Activated CD4-positive, alpha-beta T cell treated with anti-CD3 and anti-CD28 coated beads for 36 hours (primary cell): ENCODE measurements at regions of chr5 and their contacts with region 1.

Region 1: GRCh38 chr5:16616536-16617273 is at the start of gene RETREG1:
- DNase-seq: peak; percentile 90
- ATAC-seq: peak; percentile 72
- H3K4me3 Mint-ChIP-seq: peak within 1 kb of the TSS; percentile 98
- H3K27ac Mint-ChIP-seq: peak within 1 kb of the TSS; percentile 94
- H3K4me1 Mint-ChIP-seq: peaks cover 28% of the 10 kb centered on the region
- H3K27me3 Mint-ChIP-seq: no peaks in the 10 kb centered on the region
- total RNA-seq, gene RETREG1: 17.7 to 23.3 TPM

Region 2: DNA sequence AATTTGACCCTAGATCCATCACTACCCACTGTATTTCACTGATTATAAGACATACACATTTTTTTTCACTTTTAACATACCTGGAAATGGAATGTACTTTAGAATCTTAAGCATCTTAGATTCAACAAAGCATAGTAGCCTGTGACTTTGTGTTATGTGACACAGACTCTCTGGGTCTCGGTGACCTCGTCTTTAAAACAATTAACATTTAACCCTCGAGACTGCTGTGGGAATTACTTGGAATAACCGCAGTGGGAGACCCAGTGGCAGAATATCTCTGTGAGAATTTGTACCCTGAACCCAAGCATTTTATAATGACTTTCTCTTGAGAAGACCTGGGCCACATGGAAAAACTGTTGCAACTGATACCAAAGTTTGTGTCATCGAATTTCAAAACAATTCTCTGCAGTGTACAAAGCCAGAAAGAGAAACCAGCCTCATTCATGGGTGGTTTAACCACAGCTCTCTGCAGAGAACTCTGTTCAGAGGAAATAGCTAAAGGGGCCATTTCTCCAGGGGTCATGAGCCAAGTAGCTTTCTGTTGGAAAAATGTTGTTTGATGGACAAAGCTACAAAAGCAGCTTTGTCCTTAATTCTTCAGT is 10.1 kb after region 1 on chr5:
- CTCF ChIA-PET with region 1: interaction called, 12 read pairs
- POLR2A ChIA-PET with region 1: interaction called, 21 read pairs
- intact Hi-C with region 1: loop called (anchors 1 kb)
- DNase-seq: peak; percentile 55
- ATAC-seq: peak; percentile 87
- H3K4me3 Mint-ChIP-seq: peak overlapping the region; percentile 9
- H3K27ac Mint-ChIP-seq: peak overlapping the region; percentile 85
- H3K4me1 Mint-ChIP-seq: peaks cover 53% of the 10 kb centered on the region
- H3K27me3 Mint-ChIP-seq: no peaks in the 10 kb centered on the region

Region 3: DNA sequence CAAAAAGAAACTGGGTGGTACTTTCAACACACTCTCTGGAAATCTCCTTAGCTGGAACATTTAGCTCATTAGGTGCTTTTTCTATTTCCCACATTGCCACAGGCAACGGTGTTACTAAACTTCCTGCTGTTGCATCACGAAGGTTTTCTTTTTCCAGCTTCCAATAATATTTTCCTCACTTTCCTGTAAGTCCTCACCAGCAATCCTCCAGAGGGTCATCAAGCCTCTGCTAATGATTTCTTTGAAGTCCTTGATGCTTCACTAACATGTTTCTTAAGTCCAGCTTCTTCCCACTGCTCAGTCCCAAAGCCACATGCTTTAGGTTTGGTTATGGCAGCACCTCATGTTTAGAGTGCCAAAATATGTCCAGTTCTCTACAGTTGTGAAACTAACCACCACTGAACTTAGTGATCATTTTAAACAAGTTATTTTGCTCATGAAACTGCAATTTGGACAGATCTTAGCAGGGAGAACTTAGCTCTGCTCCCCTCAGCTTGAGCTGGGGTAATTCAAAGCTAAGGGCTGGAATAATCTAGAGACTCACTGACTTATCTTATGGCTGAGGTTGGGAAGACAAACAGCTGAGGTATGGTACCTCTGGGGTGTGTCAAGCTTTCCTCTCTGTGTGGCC is 40.0 kb after region 1 on chr5:
- CTCF ChIA-PET with region 1: no interaction called
- POLR2A ChIA-PET with region 1: no interaction called
- intact Hi-C with region 1: loop called in 1 of 2 experiments (anchors 5 kb)
- DNase-seq: no peak
- ATAC-seq: no peak
- H3K4me3 Mint-ChIP-seq: no peak overlapping the region
- H3K27ac Mint-ChIP-seq: no peak overlapping the region
- H3K4me1 Mint-ChIP-seq: peaks cover 12% of the 10 kb centered on the region
- H3K27me3 Mint-ChIP-seq: no peaks in the 10 kb centered on the region